Naive thymus-derived CD4-positive, alpha-beta T cell (primary cell): ENCODE measurements at regions of chr6 and their contacts with region 1.

Region 1: GRCh38 chr6:34236131-34236996 is at the start of gene HMGA1:
- DNase-seq: peak; percentile 74 to 91 (median 83)
- ATAC-seq: peak; percentile 84
- H3K4me3 ChIP-seq: peak within 1 kb of the TSS; percentile 66
- H3K4me3 Mint-ChIP-seq: peak within 1 kb of the TSS; percentile 88 to 96 (median 94)
- H3K27ac ChIP-seq: peak within 1 kb of the TSS; percentile 99
- H3K27ac Mint-ChIP-seq: peak within 1 kb of the TSS; percentile 89 to 99 (median 98)
- H3K4me1 ChIP-seq: peaks cover 13 to 15% of the 10 kb centered on the region in 2 donors
- H3K4me1 Mint-ChIP-seq: peaks cover 16 to 43% (median 34%) of the 10 kb centered on the region in 7 donors
- H3K27me3 ChIP-seq: no peaks in the 10 kb centered on the region
- H3K27me3 Mint-ChIP-seq: no peaks in the 10 kb centered on the region
- total RNA-seq, gene HMGA1: 90.0 to 180 (median 95.3) TPM

Region 2: GRCh38 chr6:33417903-33418689 is 818.3 kb before region 1 on chr6 and contains the start of gene CUTA:
- CTCF ChIA-PET with region 1: no interaction called
- POLR2A ChIA-PET with region 1: no interaction called
- intact Hi-C with region 1: loop called in 1 of 2 experiments (anchors 2 kb)
- DNase-seq: peak; percentile 91 to 100 (median 99)
- ATAC-seq: peak; percentile 92
- H3K4me3 ChIP-seq: peak within 1 kb of the TSS; percentile 74
- H3K4me3 Mint-ChIP-seq: peak within 1 kb of the TSS; percentile 88 to 97 (median 94)
- H3K27ac ChIP-seq: peak within 1 kb of the TSS; percentile 94
- H3K27ac Mint-ChIP-seq: peak within 1 kb of the TSS; percentile 98 to 100 (median 99)
- H3K4me1 ChIP-seq: peaks cover 31 to 54% of the 10 kb centered on the region in 2 donors
- H3K4me1 Mint-ChIP-seq: peaks cover 60 to 89% (median 73%) of the 10 kb centered on the region in 7 donors
- H3K27me3 ChIP-seq: no peaks in the 10 kb centered on the region
- H3K27me3 Mint-ChIP-seq: no peaks in the 10 kb centered on the region
- total RNA-seq, gene CUTA: 148 to 235 (median 158) TPM

Region 3: GRCh38 chr6:33711140-33712129 is 524.9 kb before region 1 on chr6 and contains the start of gene UQCC2:
- CTCF ChIA-PET with region 1: no interaction called
- POLR2A ChIA-PET with region 1: no interaction called
- intact Hi-C with region 1: loop called in 1 of 2 experiments (anchors 5 kb)
- DNase-seq: peak; percentile 94 to 97 (median 97)
- ATAC-seq: peak; percentile 97
- H3K4me3 ChIP-seq: peak within 1 kb of the TSS; percentile 83
- H3K4me3 Mint-ChIP-seq: peak within 1 kb of the TSS; percentile 94 to 99 (median 98)
- H3K27ac ChIP-seq: peak within 1 kb of the TSS; percentile 91
- H3K27ac Mint-ChIP-seq: peak within 1 kb of the TSS; percentile 94 to 98 (median 98)
- H3K4me1 ChIP-seq: peaks cover 9 to 11% of the 10 kb centered on the region in 2 donors
- H3K4me1 Mint-ChIP-seq: peaks cover 22 to 46% (median 36%) of the 10 kb centered on the region in 7 donors
- H3K27me3 ChIP-seq: no peaks in the 10 kb centered on the region
- H3K27me3 Mint-ChIP-seq: peaks cover 0 to 9% (median 0%) of the 10 kb centered on the region in 5 donors
- total RNA-seq, gene UQCC2: 15.7 to 79.8 (median 23.0) TPM

Region 4: DNA sequence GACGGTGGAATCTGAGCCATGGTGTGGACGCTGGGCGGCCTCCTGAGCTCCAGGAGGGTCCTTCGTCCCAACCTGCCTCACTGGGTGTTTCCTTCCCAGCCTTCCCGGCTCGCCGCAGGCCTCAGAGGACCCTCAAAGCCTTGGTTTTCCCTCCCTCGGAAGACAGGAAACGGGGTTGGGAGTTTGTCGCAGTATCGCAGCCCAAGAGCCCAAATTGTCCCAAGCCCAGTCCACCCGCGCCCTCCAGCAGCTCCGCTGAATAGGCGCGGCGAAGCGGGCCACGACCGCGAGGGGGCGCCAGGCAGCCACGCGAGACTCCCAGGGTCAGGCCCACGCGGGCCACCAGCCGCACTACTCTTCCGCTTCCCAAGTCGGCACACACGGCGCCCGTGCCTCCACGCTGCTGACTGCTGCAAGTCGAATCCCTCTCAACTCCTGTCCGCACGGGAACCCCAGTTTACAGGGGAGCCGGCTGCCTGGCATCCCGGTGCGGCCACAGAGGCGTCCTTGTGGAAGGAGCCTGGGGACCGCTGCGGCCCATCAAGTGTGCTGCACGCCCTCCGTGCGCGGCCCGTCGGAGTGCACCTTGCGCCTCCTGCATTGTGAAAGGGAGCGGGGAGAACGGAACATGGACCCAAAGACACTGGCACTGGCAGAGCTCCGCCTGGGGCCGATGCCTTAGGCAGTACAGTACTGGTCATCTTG is 40.1 kb before region 1 on chr6:
- CTCF ChIA-PET with region 1: interaction called, 4 read pairs
- POLR2A ChIA-PET with region 1: interaction called, 19 read pairs
- intact Hi-C with region 1: loop called (anchors 1 kb)
- DNase-seq: peak; percentile 79 to 95 (median 88)
- ATAC-seq: peak; percentile 99
- H3K4me3 ChIP-seq: peak overlapping the region; percentile 90
- H3K4me3 Mint-ChIP-seq: peak overlapping the region; percentile 79 to 91 (median 87)
- H3K27ac ChIP-seq: peak overlapping the region; percentile 72
- H3K27ac Mint-ChIP-seq: peak overlapping the region in 5 of 9 donors; percentile 9 to 69 (median 61)
- H3K4me1 ChIP-seq: peaks cover 4 to 6% of the 10 kb centered on the region in 2 donors
- H3K4me1 Mint-ChIP-seq: peaks cover 0 to 11% (median 8%) of the 10 kb centered on the region in 7 donors
- H3K27me3 ChIP-seq: no peaks in the 10 kb centered on the region
- H3K27me3 Mint-ChIP-seq: peaks cover 0 to 13% (median 0%) of the 10 kb centered on the region in 5 donors

Region 5: DNA sequence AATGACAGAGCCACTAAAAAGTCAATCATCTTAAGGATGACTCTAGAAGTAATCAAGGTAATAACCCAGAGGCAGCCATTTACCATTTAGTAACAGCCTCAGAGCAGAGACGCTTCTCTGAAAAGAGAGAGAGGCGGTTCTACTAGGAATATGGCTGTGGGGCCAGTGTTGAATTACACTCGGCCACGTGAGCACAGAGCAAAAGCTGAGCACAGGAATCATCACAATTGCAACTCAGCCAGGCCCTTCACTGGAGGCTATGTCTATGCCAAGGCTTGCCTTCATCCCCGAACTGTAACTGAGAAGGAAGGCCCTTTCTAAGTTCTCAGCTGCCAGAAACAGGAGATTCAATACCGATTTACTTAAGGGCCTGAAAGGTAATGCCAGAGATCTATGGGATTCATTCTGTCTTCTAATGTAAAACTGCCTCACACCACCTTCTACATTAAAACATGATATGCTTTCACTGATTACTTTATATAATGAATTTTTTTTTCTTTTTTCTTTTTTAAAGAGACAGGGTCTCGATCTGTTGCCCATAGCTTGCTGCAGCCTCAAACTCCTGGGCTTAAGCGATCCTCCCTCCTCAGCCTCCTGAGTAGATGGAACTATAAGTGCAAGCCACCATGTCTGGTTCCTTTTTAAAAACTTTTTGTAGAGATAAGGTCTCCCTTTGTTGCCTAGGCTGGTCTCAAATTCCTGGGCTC is 88.5 kb after region 1 on chr6:
- CTCF ChIA-PET with region 1: no interaction called
- POLR2A ChIA-PET with region 1: no interaction called
- intact Hi-C with region 1: no loop called
- DNase-seq: no peak
- ATAC-seq: no peak
- H3K4me3 ChIP-seq: no peak overlapping the region
- H3K4me3 Mint-ChIP-seq: no peak overlapping the region
- H3K27ac ChIP-seq: no peak overlapping the region
- H3K27ac Mint-ChIP-seq: no peak overlapping the region
- H3K4me1 ChIP-seq: no peaks in the 10 kb centered on the region
- H3K4me1 Mint-ChIP-seq: peaks cover 0 to 10% (median 3%) of the 10 kb centered on the region in 7 donors
- H3K27me3 ChIP-seq: no peaks in the 10 kb centered on the region
- H3K27me3 Mint-ChIP-seq: no peaks in the 10 kb centered on the region

Region 6: DNA sequence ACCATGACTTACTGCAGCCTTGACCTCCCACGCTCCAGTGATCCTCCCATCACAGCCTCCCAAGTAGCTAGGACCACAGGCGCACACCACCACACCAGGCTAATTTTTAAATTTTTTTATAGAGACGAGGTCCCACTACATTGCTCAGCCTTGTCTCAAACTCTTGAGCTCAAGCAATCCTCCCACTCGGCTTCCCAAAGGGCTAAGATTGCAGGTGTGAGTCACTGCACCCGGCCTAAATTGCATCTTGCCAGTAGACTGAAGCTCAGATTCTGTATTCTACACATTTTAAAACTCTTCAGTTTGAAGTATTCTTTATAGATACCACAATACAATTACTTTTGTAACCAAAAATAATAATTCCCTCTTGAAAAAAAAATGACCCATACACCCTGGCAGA is 144.7 kb after region 1 on chr6:
- CTCF ChIA-PET with region 1: no interaction called
- POLR2A ChIA-PET with region 1: no interaction called
- intact Hi-C with region 1: no loop called
- DNase-seq: no peak
- ATAC-seq: no peak
- H3K4me3 ChIP-seq: no peak overlapping the region
- H3K4me3 Mint-ChIP-seq: no peak overlapping the region
- H3K27ac ChIP-seq: no peak overlapping the region
- H3K27ac Mint-ChIP-seq: peak overlapping the region in 1 of 9 donors; percentile 47
- H3K4me1 ChIP-seq: no peaks in the 10 kb centered on the region
- H3K4me1 Mint-ChIP-seq: peaks cover 3 to 48% (median 26%) of the 10 kb centered on the region in 7 donors
- H3K27me3 ChIP-seq: no peaks in the 10 kb centered on the region
- H3K27me3 Mint-ChIP-seq: no peaks in the 10 kb centered on the region

Region 7: DNA sequence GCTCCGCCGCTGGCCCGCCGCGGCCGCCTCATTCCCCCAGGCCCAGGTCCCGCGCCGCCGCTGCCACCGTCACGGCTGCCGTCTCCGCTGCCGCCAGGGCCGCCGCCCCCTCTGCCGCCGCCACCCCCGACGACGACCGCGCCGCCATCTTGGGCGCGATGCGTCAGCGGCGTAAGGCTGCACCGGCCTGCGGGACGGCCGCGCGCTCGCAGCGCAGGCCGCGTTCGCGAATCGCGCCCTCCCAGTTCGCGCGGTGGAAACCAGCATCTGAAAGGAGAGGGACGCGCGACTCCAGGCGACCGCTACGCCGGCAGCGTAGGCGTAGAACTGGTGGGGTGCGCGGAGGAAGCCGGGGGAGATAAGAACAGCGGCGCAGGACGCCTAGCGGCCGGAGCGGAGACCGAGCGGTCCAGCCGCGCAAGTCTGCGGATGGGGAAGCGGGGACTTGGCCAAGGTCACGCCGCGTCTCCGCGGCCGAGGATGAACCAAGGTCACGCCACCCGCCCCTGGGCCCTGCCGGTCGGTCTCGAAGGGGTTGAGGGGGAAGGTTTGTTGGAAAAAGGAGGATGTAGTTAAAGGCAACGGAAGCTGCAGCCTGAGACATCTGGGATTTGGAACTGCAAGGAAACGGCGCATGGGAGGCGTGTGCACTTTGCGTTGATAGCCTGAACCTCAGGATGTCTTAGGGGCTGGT is 156.3 kb after region 1 on chr6 and contains the start of gene NUDT3:
- CTCF ChIA-PET with region 1: no interaction called
- POLR2A ChIA-PET with region 1: interaction called, 12 read pairs
- intact Hi-C with region 1: loop called (anchors 1 to 2 kb)
- DNase-seq: peak; percentile 88 to 98 (median 93)
- ATAC-seq: peak; percentile 93
- H3K4me3 ChIP-seq: peak within 1 kb of the TSS; percentile 92
- H3K4me3 Mint-ChIP-seq: peak within 1 kb of the TSS in 4 of 10 donors; percentile 79 to 99 (median 98)
- H3K27ac ChIP-seq: peak within 1 kb of the TSS; percentile 85
- H3K27ac Mint-ChIP-seq: peak within 1 kb of the TSS in 8 of 9 donors; percentile 89 to 95 (median 92)
- H3K4me1 ChIP-seq: peaks cover 11 to 16% of the 10 kb centered on the region in 2 donors
- H3K4me1 Mint-ChIP-seq: peaks cover 0 to 28% (median 23%) of the 10 kb centered on the region in 7 donors
- H3K27me3 ChIP-seq: no peaks in the 10 kb centered on the region
- H3K27me3 Mint-ChIP-seq: peaks cover 0 to 2% (median 0%) of the 10 kb centered on the region in 5 donors
- total RNA-seq, gene NUDT3: 16.2 to 29.7 (median 25.4) TPM

Region 8: GRCh38 chr6:34696739-34697543 is 460.6 kb after region 1 on chr6 and contains the start of gene ILRUN:
- CTCF ChIA-PET with region 1: no interaction called
- POLR2A ChIA-PET with region 1: no interaction called
- intact Hi-C with region 1: loop called in 1 of 2 experiments (anchors 5 kb)
- DNase-seq: peak; percentile 88 to 97 (median 93)
- ATAC-seq: peak; percentile 96
- H3K4me3 ChIP-seq: peak within 1 kb of the TSS; percentile 88
- H3K4me3 Mint-ChIP-seq: peak within 1 kb of the TSS; percentile 95 to 99 (median 98)
- H3K27ac ChIP-seq: peak within 1 kb of the TSS; percentile 94
- H3K27ac Mint-ChIP-seq: peak within 1 kb of the TSS; percentile 88 to 100 (median 99)
- H3K4me1 ChIP-seq: peaks cover 17 to 20% of the 10 kb centered on the region in 2 donors
- H3K4me1 Mint-ChIP-seq: peaks cover 30 to 60% (median 51%) of the 10 kb centered on the region in 7 donors
- H3K27me3 ChIP-seq: no peaks in the 10 kb centered on the region
- H3K27me3 Mint-ChIP-seq: peaks cover 0 to 4% (median 0%) of the 10 kb centered on the region in 5 donors
- total RNA-seq, gene ILRUN: 45.2 to 74.6 (median 53.7) TPM

Region 9: GRCh38 chr6:35259194-35259947 is 1023.0 kb after region 1 on chr6 and contains the start of gene ZNF76:
- CTCF ChIA-PET with region 1: no interaction called
- POLR2A ChIA-PET with region 1: no interaction called
- intact Hi-C with region 1: loop called in 1 of 2 experiments (anchors 2 kb)
- DNase-seq: peak; percentile 89 to 93 (median 92)
- ATAC-seq: peak; percentile 88
- H3K4me3 ChIP-seq: peak within 1 kb of the TSS; percentile 65
- H3K4me3 Mint-ChIP-seq: peak within 1 kb of the TSS; percentile 85 to 99 (median 97)
- H3K27ac ChIP-seq: peak within 1 kb of the TSS; percentile 95
- H3K27ac Mint-ChIP-seq: peak within 1 kb of the TSS; percentile 89 to 99 (median 97)
- H3K4me1 ChIP-seq: peaks cover 15 to 17% of the 10 kb centered on the region in 2 donors
- H3K4me1 Mint-ChIP-seq: peaks cover 37 to 64% (median 50%) of the 10 kb centered on the region in 7 donors
- H3K27me3 ChIP-seq: no peaks in the 10 kb centered on the region
- H3K27me3 Mint-ChIP-seq: no peaks in the 10 kb centered on the region
- total RNA-seq, gene ZNF76: 44.4 to 110 (median 77.2) TPM